Prostate gland (tissue), 2 donors: ENCODE measurements at regions of chr10 and their contacts with region 1.

Region 1: DNA sequence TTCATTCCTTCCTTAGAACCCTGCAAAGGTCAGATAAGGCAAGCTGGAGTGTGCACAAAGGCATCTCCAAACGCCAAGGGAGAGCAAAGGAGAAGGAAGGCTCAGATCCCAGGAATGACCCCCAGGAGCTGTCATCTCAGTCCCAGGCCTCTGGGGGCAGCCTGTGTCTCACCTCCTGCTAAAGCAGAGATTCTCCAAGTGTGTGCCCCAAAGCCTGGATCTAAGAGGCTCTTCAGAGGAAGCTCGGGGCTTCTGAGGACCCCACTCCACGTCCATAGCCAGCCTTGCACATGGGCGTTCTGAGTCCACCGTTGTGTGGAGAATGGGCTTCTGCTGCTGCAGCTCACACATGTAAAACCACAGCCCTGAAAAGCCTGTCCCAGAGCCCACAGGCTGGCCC is 5.1 kb upstream of the GRID1 start:
- DNase-seq: no peak
- H3K4me3 ChIP-seq: no peak overlapping the region
- H3K27ac ChIP-seq: no peak overlapping the region
- H3K4me1 ChIP-seq: no peaks in the 10 kb centered on the region
- H3K27me3 ChIP-seq: no peaks in the 10 kb centered on the region
- CTCF ChIP-seq: no peak
- POLR2A ChIP-seq: no peak

Region 2: DNA sequence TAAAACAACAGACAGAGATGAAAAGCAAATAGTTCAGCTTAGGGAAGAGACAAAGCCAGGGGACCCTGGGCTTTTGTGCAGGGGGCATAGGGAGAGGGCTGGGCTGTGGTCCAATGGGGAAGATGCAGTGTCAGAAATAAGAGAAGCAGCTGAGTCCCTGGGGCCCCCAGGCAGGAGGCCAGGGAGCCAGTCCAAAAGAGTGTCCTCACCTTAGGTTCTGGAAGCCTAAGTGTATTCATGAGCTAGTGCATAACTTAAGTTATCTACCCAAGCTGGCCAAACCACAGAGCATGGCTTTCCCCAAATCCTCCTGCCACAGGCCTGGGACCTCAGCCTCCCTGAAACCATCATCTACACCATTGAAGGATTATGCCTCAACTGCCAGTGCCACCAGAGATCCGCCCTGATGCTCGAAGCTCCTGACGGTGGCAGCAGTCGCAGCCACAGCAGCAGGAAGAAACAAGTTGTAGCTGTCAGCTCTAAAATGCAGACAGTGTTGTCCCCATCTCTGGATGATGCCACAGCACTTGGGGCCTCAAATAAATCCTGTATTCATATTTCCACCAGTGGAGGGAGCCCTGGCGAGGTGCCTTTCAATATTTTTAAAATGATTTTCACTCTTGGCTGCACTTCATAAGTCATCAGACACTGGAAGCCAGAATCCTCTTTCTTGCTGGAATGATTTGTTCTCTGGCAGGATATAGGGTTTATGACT is 579.7 kb before region 1 on chr10:
- intact Hi-C with region 1: loop called (anchors 5 kb)
- DNase-seq: no peak
- H3K4me3 ChIP-seq: no peak overlapping the region
- H3K27ac ChIP-seq: no peak overlapping the region
- H3K4me1 ChIP-seq: no peaks in the 10 kb centered on the region
- H3K27me3 ChIP-seq: no peaks in the 10 kb centered on the region
- CTCF ChIP-seq: peak in 1 of 4 experiments; percentile 11
- POLR2A ChIP-seq: no peak

Region 3: DNA sequence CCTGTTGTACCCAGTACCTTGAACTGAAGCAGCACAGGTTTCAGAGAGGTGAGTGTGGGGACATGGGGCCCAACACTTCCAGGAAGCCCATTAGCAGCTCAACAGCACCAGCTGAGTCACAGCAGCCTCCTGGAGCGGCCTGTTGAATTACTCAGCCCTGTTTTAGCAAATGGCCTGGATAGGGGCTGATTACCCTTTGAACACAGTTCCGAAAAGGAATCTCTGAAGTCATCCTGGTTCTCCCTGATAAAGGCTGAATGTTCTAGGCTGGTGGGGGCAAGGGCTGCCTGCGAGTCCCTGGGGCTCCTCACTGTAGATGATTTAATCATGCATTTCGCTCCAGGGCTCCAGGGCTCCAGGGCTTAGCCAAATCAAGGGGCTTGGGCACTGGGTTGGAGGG is 292.6 kb before region 1 on chr10:
- intact Hi-C with region 1: no loop called
- DNase-seq: no peak
- H3K4me3 ChIP-seq: no peak overlapping the region
- H3K27ac ChIP-seq: no peak overlapping the region
- H3K4me1 ChIP-seq: no peaks in the 10 kb centered on the region
- H3K27me3 ChIP-seq: no peaks in the 10 kb centered on the region
- CTCF ChIP-seq: no peak
- POLR2A ChIP-seq: no peak

Region 4: DNA sequence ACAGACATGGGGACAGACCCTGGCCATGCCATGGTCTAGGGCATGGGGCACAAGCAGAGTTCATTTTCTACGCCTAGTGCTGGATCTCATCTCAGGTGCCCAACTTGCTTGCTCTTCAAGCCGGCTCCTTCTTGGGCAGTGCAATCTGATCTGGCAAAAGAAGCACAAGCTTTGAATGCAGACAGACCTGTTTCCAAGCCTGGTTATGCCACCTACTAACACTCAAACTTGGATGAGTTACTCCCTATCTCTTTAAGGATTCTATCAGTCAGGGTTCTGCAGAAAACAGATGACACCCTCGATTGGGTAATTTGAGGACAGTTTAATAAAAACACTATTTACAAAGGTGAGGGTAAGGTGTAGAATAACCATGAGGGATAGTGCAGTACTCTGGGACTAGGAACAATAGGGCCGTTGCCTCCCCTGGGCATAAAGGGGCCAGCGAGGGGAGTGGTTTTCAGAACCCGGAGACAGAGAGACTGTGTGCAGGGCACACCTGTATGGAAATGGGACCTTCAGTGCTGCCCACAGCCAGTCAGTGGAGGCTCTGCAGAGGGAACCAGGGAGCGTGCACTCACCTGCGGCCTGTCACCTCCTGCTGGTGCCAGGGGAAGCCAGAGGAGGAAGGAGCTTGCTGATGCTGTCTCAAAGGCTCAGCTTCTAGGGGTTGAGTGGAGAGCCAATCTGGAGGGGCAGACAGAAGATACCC is 185.0 kb after region 1 on chr10:
- intact Hi-C with region 1: no loop called
- DNase-seq: peak; percentile 67
- H3K4me3 ChIP-seq: no peak overlapping the region
- H3K27ac ChIP-seq: no peak overlapping the region
- H3K4me1 ChIP-seq: no peaks in the 10 kb centered on the region
- H3K27me3 ChIP-seq: no peaks in the 10 kb centered on the region
- CTCF ChIP-seq: no peak
- POLR2A ChIP-seq: no peak